ENCODE measurements at regions of chr18 and their contacts with region 1.

Region 1: GRCh38 chr18:48119204-48119603 is 188.7 kb upstream of the SMAD2 start:
- DNase-seq: no peak
- H3K4me3 ChIP-seq: no peak overlapping the region
- H3K27ac ChIP-seq: no peak overlapping the region
- H3K4me1 ChIP-seq: peaks cover 0 to 11% (median 0%) of the 10 kb centered on the region in 4 donors
- H3K27me3 ChIP-seq: no peaks in the 10 kb centered on the region
- CTCF ChIP-seq: no peak
- EP300 ChIP-seq: no peak
- POLR2A ChIP-seq: no peak

Region 2: GRCh38 chr18:48074929-48075706 is 44.1 kb before region 1 on chr18:
- in situ Hi-C with region 1: no loop called
- intact Hi-C with region 1: loop called (anchors 5 kb)
- DNase-seq: no peak
- H3K4me3 ChIP-seq: no peak overlapping the region
- H3K27ac ChIP-seq: no peak overlapping the region
- H3K4me1 ChIP-seq: no peaks in the 10 kb centered on the region
- H3K27me3 ChIP-seq: no peaks in the 10 kb centered on the region
- CTCF ChIP-seq: no peak
- EP300 ChIP-seq: no peak
- POLR2A ChIP-seq: no peak